ENCODE measurements at regions of chr10 and their contacts with region 1.

Region 1: DNA sequence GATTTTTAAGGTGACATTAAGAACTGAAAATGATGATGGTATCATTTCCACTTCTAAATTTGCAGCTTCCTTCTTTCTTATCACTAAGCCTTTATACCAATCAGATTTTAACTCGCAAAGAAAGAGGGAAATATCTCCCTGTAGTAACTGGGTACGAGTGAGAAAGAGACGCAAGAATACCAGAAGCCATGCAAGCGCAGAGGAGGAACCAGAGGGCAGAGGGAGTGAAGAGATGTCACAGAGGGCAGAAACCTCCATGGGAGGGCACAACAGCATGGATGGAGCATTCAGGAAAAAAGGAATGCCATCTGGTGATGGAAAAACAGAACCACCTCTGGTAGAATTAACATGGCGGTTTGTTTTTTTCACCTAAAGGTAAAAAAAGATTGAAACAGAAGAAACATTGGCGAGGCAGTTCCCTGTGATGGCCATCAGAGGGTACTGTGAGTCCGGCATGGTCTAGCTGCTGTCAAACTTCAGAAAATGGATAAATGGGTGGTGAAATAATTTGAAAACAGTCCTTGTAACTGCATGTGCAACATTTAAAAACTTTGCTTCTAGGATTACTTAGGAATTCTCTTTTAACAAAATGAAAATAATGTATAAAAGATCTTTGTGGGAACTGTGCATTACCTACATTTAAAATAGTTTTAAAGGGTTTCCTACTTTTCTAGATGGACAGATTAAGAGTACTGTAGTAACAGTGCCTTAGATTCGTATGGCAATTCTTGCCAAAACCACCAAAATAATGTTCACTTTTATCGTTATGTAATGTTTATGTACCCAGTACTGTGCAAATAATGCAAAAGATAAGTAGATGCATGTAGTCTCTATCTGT is 91.8 kb downstream of the ARHGAP12 start:
- DNase-seq: peak; percentile 15
- H3K4me3 Mint-ChIP-seq: no peak overlapping the region
- H3K27ac Mint-ChIP-seq: no peak overlapping the region
- H3K4me1 Mint-ChIP-seq: peaks cover 7% of the 10 kb centered on the region
- H3K27me3 Mint-ChIP-seq: no peaks in the 10 kb centered on the region

Region 2: DNA sequence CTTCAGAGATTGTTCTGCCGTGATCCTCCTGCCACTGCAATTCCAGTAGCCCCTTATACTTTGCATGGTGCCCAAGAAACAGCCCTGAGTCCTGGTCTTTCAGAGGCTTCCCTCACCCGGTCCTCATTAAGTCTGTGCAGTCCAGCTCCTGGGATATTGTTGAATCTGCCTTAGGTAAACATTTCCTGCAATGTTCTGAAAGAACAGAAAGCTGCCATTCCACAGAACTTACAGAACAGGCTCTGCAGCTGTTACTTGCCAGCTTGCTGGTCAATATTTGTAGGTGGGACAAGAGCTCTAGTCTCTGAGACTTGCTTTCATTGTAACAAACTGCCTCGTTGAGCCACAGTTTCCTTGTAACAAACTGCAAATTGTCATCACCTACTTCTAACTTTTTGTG is 334.4 kb after region 1 on chr10:
- CTCF ChIA-PET with region 1: no interaction called
- intact Hi-C with region 1: loop called (anchors 1 kb)
- DNase-seq: no peak
- H3K4me3 Mint-ChIP-seq: no peak overlapping the region
- H3K27ac Mint-ChIP-seq: no peak overlapping the region
- H3K4me1 Mint-ChIP-seq: no peaks in the 10 kb centered on the region
- H3K27me3 Mint-ChIP-seq: no peaks in the 10 kb centered on the region

Region 3: GRCh38 chr10:33082373-33082895 is 1245.6 kb after region 1 on chr10:
- CTCF ChIA-PET with region 1: no interaction called
- intact Hi-C with region 1: no loop called
- DNase-seq: no peak
- H3K4me3 Mint-ChIP-seq: no peak overlapping the region
- H3K27ac Mint-ChIP-seq: no peak overlapping the region
- H3K4me1 Mint-ChIP-seq: peaks cover 9% of the 10 kb centered on the region
- H3K27me3 Mint-ChIP-seq: no peaks in the 10 kb centered on the region